ENCODE measurements at regions of chr3 and their contacts with region 1.

Region 1: GRCh38 chr3:140595295-140595694 is 82.6 kb upstream of the TRIM42 start:
- DNase-seq: peak in 1 of 5 donors; percentile 52
- ATAC-seq: peak; percentile 80 to 87 (median 83)
- H3K4me3 ChIP-seq: no peak overlapping the region
- H3K27ac ChIP-seq: peak overlapping the region in 10 of 12 donors; percentile 9 to 77 (median 44)
- H3K4me1 ChIP-seq: peaks cover 3 to 39% (median 21%) of the 10 kb centered on the region in 12 donors
- H3K27me3 ChIP-seq: no peaks in the 10 kb centered on the region
- CTCF ChIP-seq: no peak
- POLR2A ChIP-seq: no peak

Region 2: GRCh38 chr3:140719841-140720614 is 124.7 kb after region 1 on chr3:
- intact Hi-C with region 1: loop called in 1 of 10 experiments (anchors 5 kb)
- DNase-seq: peak in 1 of 5 donors; percentile 33
- ATAC-seq: peak; percentile 50 to 80 (median 64)
- H3K4me3 ChIP-seq: no peak overlapping the region
- H3K27ac ChIP-seq: peak overlapping the region in 3 of 12 donors; percentile 12 to 31 (median 27)
- H3K4me1 ChIP-seq: peaks cover 0 to 11% (median 0%) of the 10 kb centered on the region in 12 donors
- H3K27me3 ChIP-seq: no peaks in the 10 kb centered on the region
- CTCF ChIP-seq: no peak
- POLR2A ChIP-seq: no peak

Measured in heart left ventricle (tissue), 16 donors.